ENCODE measurements at regions of chr1 and their contacts with region 1.

Region 1: GRCh38 chr1:16055613-16056520 is 12.3 kb downstream of the CLCNKB start:
- DNase-seq: peak; percentile 95
- H3K4me3 ChIP-seq: no peak overlapping the region
- H3K27ac ChIP-seq: no peak overlapping the region
- H3K4me1 ChIP-seq: peaks cover 0 to 10% (median 4%) of the 10 kb centered on the region in 4 donors
- H3K27me3 ChIP-seq: no peaks in the 10 kb centered on the region
- CTCF ChIP-seq: peak; percentile 85 to 98 (median 92)
- EP300 ChIP-seq: no peak
- POLR2A ChIP-seq: no peak

Region 2: GRCh38 chr1:16009030-16009709 is 46.7 kb before region 1 on chr1:
- intact Hi-C with region 1: loop called (anchors 2 kb)
- DNase-seq: peak; percentile 95
- H3K4me3 ChIP-seq: no peak overlapping the region
- H3K27ac ChIP-seq: no peak overlapping the region
- H3K4me1 ChIP-seq: peaks cover 18 to 23% (median 20%) of the 10 kb centered on the region in 4 donors
- H3K27me3 ChIP-seq: no peaks in the 10 kb centered on the region
- CTCF ChIP-seq: peak; percentile 97 to 99 (median 99)
- EP300 ChIP-seq: no peak
- POLR2A ChIP-seq: no peak

Region 3: DNA sequence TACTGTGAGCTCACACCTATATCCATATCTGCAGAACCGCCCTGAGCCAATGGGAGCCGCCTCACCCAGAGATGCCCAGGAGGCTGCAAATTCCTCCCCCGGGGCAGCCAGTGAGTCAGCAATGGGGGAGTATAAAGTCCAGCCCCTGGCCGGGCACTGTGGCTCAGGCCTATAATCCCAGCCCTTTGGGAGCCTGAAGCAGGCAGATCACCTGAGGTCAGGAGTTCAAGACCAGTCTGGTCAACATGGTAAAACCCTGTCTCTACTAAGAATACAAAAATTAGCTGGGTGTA is 17.3 kb before region 1 on chr1:
- intact Hi-C with region 1: loop called (anchors 1 kb)
- DNase-seq: no peak
- H3K4me3 ChIP-seq: no peak overlapping the region
- H3K27ac ChIP-seq: no peak overlapping the region
- H3K4me1 ChIP-seq: no peaks in the 10 kb centered on the region
- H3K27me3 ChIP-seq: no peaks in the 10 kb centered on the region
- CTCF ChIP-seq: no peak
- EP300 ChIP-seq: no peak
- POLR2A ChIP-seq: no peak

Region 4: GRCh38 chr1:16342331-16343062 is 286.6 kb after region 1 on chr1:
- intact Hi-C with region 1: no loop called
- DNase-seq: no peak
- H3K4me3 ChIP-seq: no peak overlapping the region
- H3K27ac ChIP-seq: no peak overlapping the region
- H3K4me1 ChIP-seq: peaks cover 6 to 33% (median 16%) of the 10 kb centered on the region in 4 donors
- H3K27me3 ChIP-seq: no peaks in the 10 kb centered on the region
- CTCF ChIP-seq: no peak
- EP300 ChIP-seq: no peak
- POLR2A ChIP-seq: no peak